Breast epithelium (tissue), 4 donors: ENCODE measurements at regions of chr5 and their contacts with region 1.

Region 1: GRCh38 chr5:149834246-149834855 is 104.2 kb downstream of the PPARGC1B start:
- DNase-seq: peak in 1 of 2 donors; percentile 46
- H3K4me3 ChIP-seq: no peak overlapping the region
- H3K27ac ChIP-seq: no peak overlapping the region
- H3K4me1 ChIP-seq: no peaks in the 10 kb centered on the region
- H3K27me3 ChIP-seq: no peaks in the 10 kb centered on the region
- CTCF ChIP-seq: peak; percentile 49 to 77 (median 67)
- POLR2A ChIP-seq: no peak

Region 2: DNA sequence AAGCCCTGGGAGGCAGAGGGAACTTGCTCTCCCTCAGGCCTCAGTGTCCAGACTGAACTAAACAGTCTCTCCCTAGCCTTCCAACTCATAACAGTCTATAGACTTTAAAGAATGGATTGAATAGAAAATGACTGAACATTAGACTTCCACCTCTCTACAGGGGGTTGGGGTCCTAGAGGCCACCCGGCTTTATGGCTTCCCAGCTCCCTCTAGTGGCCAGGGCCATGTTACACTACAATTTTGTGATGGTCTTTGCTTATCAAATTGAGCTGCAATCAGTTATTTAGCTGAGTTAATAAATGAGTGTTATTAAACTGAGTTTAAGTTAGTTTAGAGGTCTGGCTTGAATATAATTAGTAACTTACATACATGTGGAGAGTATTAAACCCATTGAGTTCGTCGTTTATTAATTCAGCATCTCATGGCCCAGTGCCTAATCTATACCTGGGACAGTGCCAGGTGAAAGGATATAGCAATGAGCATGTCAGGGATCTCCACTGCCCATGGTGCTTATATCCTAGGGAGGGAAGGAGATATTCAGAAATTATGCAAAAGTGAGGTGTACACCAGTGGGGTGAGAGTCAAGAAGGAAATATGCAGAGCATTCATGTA is 876.7 kb before region 1 on chr5:
- intact Hi-C with region 1: loop called (anchors 5 kb)
- DNase-seq: no peak
- H3K4me3 ChIP-seq: no peak overlapping the region
- H3K27ac ChIP-seq: no peak overlapping the region
- H3K4me1 ChIP-seq: no peaks in the 10 kb centered on the region
- H3K27me3 ChIP-seq: no peaks in the 10 kb centered on the region
- CTCF ChIP-seq: peak; percentile 62 to 67 (median 66)
- POLR2A ChIP-seq: no peak

Region 3: GRCh38 chr5:149988126-149988525 is 153.8 kb after region 1 on chr5:
- intact Hi-C with region 1: loop called (anchors 10 kb)
- DNase-seq: no peak
- H3K4me3 ChIP-seq: no peak overlapping the region
- H3K27ac ChIP-seq: no peak overlapping the region
- H3K4me1 ChIP-seq: no peaks in the 10 kb centered on the region
- H3K27me3 ChIP-seq: no peaks in the 10 kb centered on the region
- CTCF ChIP-seq: no peak
- POLR2A ChIP-seq: no peak